IMR-90 (cell line): ENCODE measurements at regions of chr13 and their contacts with region 1.

Region 1: GRCh38 chr13:26062844-26063444 is 11.1 kb upstream of the SHISA2 start:
- DNase-seq: peak; percentile 33
- ATAC-seq: peak; percentile 71; the same call in 1 of the 2 replicates
- H3K4me3 ChIP-seq: no peak overlapping the region
- H3K27ac ChIP-seq: no peak overlapping the region
- H3K4me1 ChIP-seq: no peaks in the 10 kb centered on the region
- H3K27me3 ChIP-seq: no peaks in the 10 kb centered on the region; the same call in 1 of the 2 replicates
- CTCF ChIP-seq: peak; percentile 50
- POLR2A ChIP-seq: no peak
- RAD21 ChIP-seq: peak; percentile 52

Region 2: GRCh38 chr13:25574437-25575411 is 488.2 kb before region 1 on chr13:
- CTCF ChIA-PET with region 1: interaction called, 3 read pairs
- POLR2A ChIA-PET with region 1: no interaction called
- dilution Hi-C with region 1: no loop called
- in situ Hi-C with region 1: no loop called
- intact Hi-C with region 1: loop called (anchors 1 kb)
- DNase-seq: peak; percentile 78
- ATAC-seq: peak; percentile 96
- H3K4me3 ChIP-seq: no peak overlapping the region
- H3K27ac ChIP-seq: no peak overlapping the region
- H3K4me1 ChIP-seq: no peaks in the 10 kb centered on the region
- H3K27me3 ChIP-seq: no peaks in the 10 kb centered on the region
- CTCF ChIP-seq: peak; percentile 79
- POLR2A ChIP-seq: no peak
- RAD21 ChIP-seq: peak; percentile 83

Region 3: GRCh38 chr13:25836574-25837336 is 226.2 kb before region 1 on chr13:
- CTCF ChIA-PET with region 1: no interaction called
- POLR2A ChIA-PET with region 1: no interaction called
- dilution Hi-C with region 1: no loop called
- in situ Hi-C with region 1: loop called (anchors 10 kb)
- intact Hi-C with region 1: no loop called
- DNase-seq: no peak
- ATAC-seq: no peak
- H3K4me3 ChIP-seq: no peak overlapping the region
- H3K27ac ChIP-seq: no peak overlapping the region
- H3K4me1 ChIP-seq: no peaks in the 10 kb centered on the region
- H3K27me3 ChIP-seq: no peaks in the 10 kb centered on the region
- CTCF ChIP-seq: no peak
- POLR2A ChIP-seq: no peak
- RAD21 ChIP-seq: no peak

Region 4: DNA sequence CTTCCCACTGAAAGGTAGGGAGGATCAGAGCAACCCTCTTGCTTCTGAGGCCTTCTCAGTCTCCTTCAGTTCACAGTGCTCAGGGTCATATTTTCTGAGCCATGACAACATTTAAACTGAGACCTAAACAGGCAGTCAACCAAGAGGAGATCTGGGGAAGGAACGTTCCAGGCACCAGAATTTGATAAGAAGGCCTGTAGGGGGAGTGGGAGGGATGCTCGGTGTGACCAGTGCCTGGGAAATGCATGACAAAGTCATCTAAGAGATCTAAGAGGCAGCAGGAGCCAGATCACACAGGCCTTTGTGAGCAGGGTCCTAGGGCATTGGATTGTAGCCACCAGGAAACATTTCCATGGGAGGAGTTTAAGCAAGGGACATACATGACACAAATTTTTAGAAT is 82.7 kb before region 1 on chr13:
- CTCF ChIA-PET with region 1: no interaction called
- POLR2A ChIA-PET with region 1: no interaction called
- dilution Hi-C with region 1: no loop called
- in situ Hi-C with region 1: no loop called
- intact Hi-C with region 1: loop called (anchors 5 kb)
- DNase-seq: peak; percentile 3
- ATAC-seq: peak; percentile 44; the same call in 1 of the 2 replicates
- H3K4me3 ChIP-seq: no peak overlapping the region
- H3K27ac ChIP-seq: no peak overlapping the region
- H3K4me1 ChIP-seq: no peaks in the 10 kb centered on the region
- H3K27me3 ChIP-seq: no peaks in the 10 kb centered on the region
- CTCF ChIP-seq: no peak
- POLR2A ChIP-seq: no peak
- RAD21 ChIP-seq: no peak